GM10248 (cell line): ENCODE measurements at regions of chr7 and their contacts with region 1.

Region 1: DNA sequence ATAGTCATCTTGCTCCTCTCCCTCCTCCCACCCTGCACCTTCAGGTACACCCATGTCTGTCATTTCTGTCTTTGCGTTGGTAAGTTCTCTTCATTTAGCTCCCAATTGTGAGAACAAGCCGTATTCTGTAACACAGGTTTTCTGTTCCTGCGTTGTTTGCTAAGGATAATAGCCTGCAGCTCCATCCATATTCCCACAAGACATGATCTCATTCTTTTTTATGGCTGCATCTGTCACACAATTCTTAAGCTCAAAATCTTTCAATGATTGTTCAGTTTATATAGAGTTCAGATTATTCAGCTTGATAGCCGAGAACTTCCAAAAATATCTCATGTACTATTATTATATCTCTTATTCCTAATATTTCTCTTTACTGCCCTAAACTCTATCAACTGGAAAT is 16.0 kb upstream of the TMEM168 start:
- DNase-seq: no peak
- CTCF ChIP-seq: no peak

Region 2: DNA sequence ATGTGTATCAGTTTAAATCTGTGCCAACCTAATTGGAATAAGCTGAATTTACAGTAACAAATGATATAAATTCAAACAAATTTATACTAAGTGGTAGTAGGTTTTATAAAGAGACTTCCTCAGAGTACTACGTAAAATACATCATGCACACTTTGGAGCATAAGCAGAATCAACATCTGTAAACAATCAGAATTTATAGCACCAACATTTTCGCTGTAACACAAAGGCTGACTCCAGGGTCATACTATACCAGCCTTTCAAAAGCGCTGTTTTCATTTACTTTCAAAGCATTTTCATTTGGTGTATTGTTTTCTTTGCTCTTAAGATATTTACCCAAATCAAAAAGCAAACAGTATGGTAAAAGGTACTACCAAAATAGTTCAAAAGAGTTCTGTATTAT is 13.4 kb after region 1 on chr7:
- CTCF ChIA-PET with region 1: interaction called, 28 read pairs
- POLR2A ChIA-PET with region 1: no interaction called
- DNase-seq: no peak
- CTCF ChIP-seq: no peak